ENCODE measurements at regions of chr22 and their contacts with region 1.

Region 1: GRCh38 chr22:42369245-42370041 is 62.8 kb downstream of the NFAM1 start:
- DNase-seq: peak; percentile 91
- ATAC-seq: peak; percentile 98
- H3K4me3 ChIP-seq: peak overlapping the region; percentile 58 to 90 (median 72)
- H3K4me3 Mint-ChIP-seq: peak overlapping the region; percentile 89
- H3K27ac ChIP-seq: no peak overlapping the region
- H3K27ac Mint-ChIP-seq: peak overlapping the region; percentile 72
- H3K4me1 ChIP-seq: peaks cover 17 to 28% of the 10 kb centered on the region in 2 donors
- H3K4me1 Mint-ChIP-seq: peaks cover 22% of the 10 kb centered on the region
- H3K27me3 ChIP-seq: peaks cover 0 to 52% (median 26%) of the 10 kb centered on the region in 4 experiments
- H3K27me3 Mint-ChIP-seq: peaks cover 38% of the 10 kb centered on the region
- CTCF ChIP-seq: no peak

Region 2: DNA sequence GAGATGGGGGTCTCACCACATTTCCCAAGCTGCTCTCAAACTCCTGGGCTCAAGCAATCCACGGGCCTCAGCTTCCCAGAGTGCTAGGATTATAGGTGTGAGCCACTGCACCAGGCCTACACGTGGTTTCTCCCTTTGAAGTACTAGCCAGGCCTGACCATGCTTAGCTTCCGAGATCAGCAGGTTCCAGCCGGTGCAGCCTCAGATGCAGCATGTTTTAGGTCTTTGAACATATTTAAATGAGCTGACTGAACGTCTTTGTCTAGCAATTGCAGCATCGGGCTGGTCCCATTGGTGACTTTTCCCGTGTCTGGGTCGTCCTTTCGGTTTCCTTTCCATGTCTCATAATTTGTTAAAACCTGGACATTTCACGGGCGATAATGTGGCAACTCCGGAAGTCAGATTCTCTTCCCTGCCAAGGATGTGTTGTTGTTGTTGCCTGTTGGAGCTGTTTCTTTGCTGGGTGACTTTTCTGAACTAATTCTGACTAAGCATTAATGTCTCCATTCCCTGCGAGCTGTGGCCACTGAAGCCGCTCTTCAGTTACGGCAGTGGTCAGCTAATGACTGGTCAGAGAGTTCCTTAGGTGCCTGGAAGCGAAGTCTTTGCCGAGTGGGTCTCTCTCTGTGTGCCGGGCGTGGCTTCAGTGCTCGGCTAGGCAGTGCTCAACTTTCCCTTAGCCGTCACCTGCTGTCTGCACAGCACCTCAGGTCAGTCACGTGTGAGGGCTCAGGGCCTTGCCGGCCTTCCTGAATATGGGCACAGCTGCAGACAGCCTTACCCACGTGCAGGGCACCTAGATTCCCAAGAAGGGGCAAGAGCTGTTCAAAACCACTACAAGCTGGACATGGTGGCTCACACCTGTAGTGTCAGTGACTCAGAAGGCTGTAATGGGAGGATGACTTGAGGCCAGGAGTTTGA is 235.1 kb before region 1 on chr22:
- CTCF ChIA-PET with region 1: no interaction called
- POLR2A ChIA-PET with region 1: no interaction called
- intact Hi-C with region 1: no loop called
- DNase-seq: no peak
- ATAC-seq: no peak
- H3K4me3 ChIP-seq: no peak overlapping the region
- H3K4me3 Mint-ChIP-seq: no peak overlapping the region
- H3K27ac ChIP-seq: no peak overlapping the region
- H3K27ac Mint-ChIP-seq: no peak overlapping the region
- H3K4me1 ChIP-seq: no peaks in the 10 kb centered on the region
- H3K4me1 Mint-ChIP-seq: no peaks in the 10 kb centered on the region
- H3K27me3 ChIP-seq: peaks cover 0 to 5% (median 0%) of the 10 kb centered on the region in 4 experiments
- H3K27me3 Mint-ChIP-seq: no peaks in the 10 kb centered on the region
- CTCF ChIP-seq: no peak

Region 3: GRCh38 chr22:42300259-42301076 is 69.0 kb before region 1 on chr22:
- CTCF ChIA-PET with region 1: no interaction called
- POLR2A ChIA-PET with region 1: no interaction called
- intact Hi-C with region 1: loop called (anchors 2 kb)
- DNase-seq: peak; percentile 79
- ATAC-seq: peak; percentile 91
- H3K4me3 ChIP-seq: peak overlapping the region in 4 of 5 experiments; percentile 46 to 61 (median 58)
- H3K4me3 Mint-ChIP-seq: peak overlapping the region; percentile 86
- H3K27ac ChIP-seq: peak overlapping the region; percentile 79 to 82
- H3K27ac Mint-ChIP-seq: peak overlapping the region; percentile 91
- H3K4me1 ChIP-seq: peaks cover 52 to 68% of the 10 kb centered on the region in 2 donors
- H3K4me1 Mint-ChIP-seq: peaks cover 51% of the 10 kb centered on the region
- H3K27me3 ChIP-seq: peaks cover 0 to 10% (median 2%) of the 10 kb centered on the region in 4 experiments
- H3K27me3 Mint-ChIP-seq: peaks cover 9% of the 10 kb centered on the region
- CTCF ChIP-seq: no peak

Region 4: GRCh38 chr22:42396621-42397331 is 27.3 kb after region 1 on chr22:
- CTCF ChIA-PET with region 1: interaction called, 4 read pairs
- POLR2A ChIA-PET with region 1: interaction called, 10 read pairs
- intact Hi-C with region 1: loop called (anchors 1 kb)
- DNase-seq: peak; percentile 84
- ATAC-seq: peak; percentile 67
- H3K4me3 ChIP-seq: peak overlapping the region; percentile 38 to 78 (median 53)
- H3K4me3 Mint-ChIP-seq: peak overlapping the region; percentile 92
- H3K27ac ChIP-seq: peak overlapping the region; percentile 80 to 99
- H3K27ac Mint-ChIP-seq: peak overlapping the region; percentile 99
- H3K4me1 ChIP-seq: peaks cover 40 to 46% of the 10 kb centered on the region in 2 donors
- H3K4me1 Mint-ChIP-seq: peaks cover 51% of the 10 kb centered on the region
- H3K27me3 ChIP-seq: no peaks in the 10 kb centered on the region
- H3K27me3 Mint-ChIP-seq: no peaks in the 10 kb centered on the region
- CTCF ChIP-seq: peak; percentile 49

Region 5: GRCh38 chr22:42500161-42500835 is 130.9 kb after region 1 on chr22:
- CTCF ChIA-PET with region 1: no interaction called
- POLR2A ChIA-PET with region 1: no interaction called
- intact Hi-C with region 1: no loop called
- DNase-seq: peak; percentile 91
- ATAC-seq: peak; percentile 89
- H3K4me3 ChIP-seq: peak overlapping the region in 4 of 5 experiments; percentile 41 to 60 (median 50)
- H3K4me3 Mint-ChIP-seq: peak overlapping the region; percentile 83
- H3K27ac ChIP-seq: no peak overlapping the region
- H3K27ac Mint-ChIP-seq: peak overlapping the region; percentile 37
- H3K4me1 ChIP-seq: peaks cover 12 to 14% of the 10 kb centered on the region in 2 donors
- H3K4me1 Mint-ChIP-seq: peaks cover 15% of the 10 kb centered on the region
- H3K27me3 ChIP-seq: no peaks in the 10 kb centered on the region
- H3K27me3 Mint-ChIP-seq: no peaks in the 10 kb centered on the region
- CTCF ChIP-seq: no peak

Measured in B cell (primary cell).